ENCODE measurements at regions of chr19 and their contacts with region 1.

Region 1: DNA sequence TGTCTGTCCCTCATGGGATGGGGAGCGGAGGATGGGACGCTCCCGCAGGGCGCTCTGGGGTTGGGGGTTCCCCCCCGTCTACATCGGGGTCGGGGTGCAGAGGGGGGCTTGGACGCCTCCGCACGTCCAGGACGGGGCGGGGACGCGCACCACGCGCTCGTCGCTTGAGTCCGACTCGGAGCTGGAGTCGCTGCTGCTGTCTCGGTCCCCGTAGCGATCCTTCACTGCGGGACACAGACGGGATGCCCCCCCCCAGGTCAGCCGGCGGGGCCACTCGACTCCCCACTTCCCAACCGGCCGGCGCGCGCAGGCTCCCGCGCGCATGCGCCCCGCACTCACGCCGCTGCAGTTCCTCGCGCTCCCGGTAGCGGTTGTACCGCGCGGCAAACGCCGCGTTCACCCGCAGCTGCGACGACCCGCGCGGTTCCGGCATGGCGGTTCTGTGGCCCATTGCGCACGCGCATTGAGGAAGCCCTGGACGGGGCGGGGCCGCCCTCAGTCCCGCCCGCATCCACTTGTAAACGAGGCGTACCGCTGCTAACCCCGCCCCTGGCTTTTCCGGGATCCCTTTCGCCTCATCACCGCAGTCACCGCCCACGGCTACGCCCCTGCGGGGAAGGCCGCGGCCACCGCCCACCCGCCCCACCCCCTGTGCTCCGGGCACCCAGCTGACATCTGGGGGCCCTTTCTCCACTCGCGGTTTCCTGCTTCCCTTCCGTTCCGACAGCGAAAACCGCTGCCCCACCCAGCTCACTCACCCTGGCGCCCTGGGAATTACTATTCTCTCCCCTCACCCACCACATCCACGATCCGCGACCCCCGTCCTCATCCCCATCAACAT is at the start of gene KRI1:
- DNase-seq: peak; percentile 95 to 98 (median 97)
- H3K4me3 ChIP-seq: peak within 1 kb of the TSS; percentile 57 to 98 (median 82)
- H3K27ac ChIP-seq: peak within 1 kb of the TSS; percentile 51 to 97 (median 89)
- H3K27me3 ChIP-seq: no peaks in the 10 kb centered on the region
- CTCF ChIP-seq: peak in 47 of 56 donors; percentile 11 to 69 (median 42)
- total RNA-seq, gene KRI1: 11.3 to 32.1 (median 19.2) TPM

Region 2: GRCh38 chr19:10403137-10404021 is 162.4 kb before region 1 on chr19 and contains the start of gene CDC37:
- intact Hi-C with region 1: loop called (anchors 5 to 10 kb)
- DNase-seq: peak; percentile 95 to 100 (median 98)
- H3K4me3 ChIP-seq: peak within 1 kb of the TSS; percentile 64 to 99 (median 91)
- H3K27ac ChIP-seq: peak within 1 kb of the TSS in 51 of 59 donors; percentile 11 to 85 (median 69)
- H3K27me3 ChIP-seq: peaks cover 0 to 6% (median 0%) of the 10 kb centered on the region in 45 donors
- CTCF ChIP-seq: peak in 22 of 56 donors; percentile 6 to 47 (median 23)
- total RNA-seq, gene CDC37: 92.2 to 206 (median 145) TPM

Region 3: GRCh38 chr19:10408511-10409283 is 157.1 kb before region 1 on chr19:
- intact Hi-C with region 1: loop called (anchors 5 to 10 kb)
- DNase-seq: peak in 3 of 10 donors; percentile 38 to 45 (median 45)
- H3K4me3 ChIP-seq: peak overlapping the region in 3 of 59 donors; percentile 8 to 25 (median 17)
- H3K27ac ChIP-seq: peak overlapping the region in 36 of 59 donors; percentile 0 to 75 (median 46)
- H3K27me3 ChIP-seq: peaks cover 0 to 8% (median 0%) of the 10 kb centered on the region in 45 donors
- CTCF ChIP-seq: no peak

Region 4: GRCh38 chr19:10502524-10503001 is 63.2 kb before region 1 on chr19:
- intact Hi-C with region 1: loop called (anchors 5 kb)
- DNase-seq: peak; percentile 86 to 94 (median 90)
- H3K4me3 ChIP-seq: peak overlapping the region; percentile 71 to 100 (median 95)
- H3K27ac ChIP-seq: peak overlapping the region; percentile 94 to 100 (median 99)
- H3K27me3 ChIP-seq: no peaks in the 10 kb centered on the region
- CTCF ChIP-seq: peak in 28 of 56 donors; percentile 2 to 46 (median 20)

Region 5: DNA sequence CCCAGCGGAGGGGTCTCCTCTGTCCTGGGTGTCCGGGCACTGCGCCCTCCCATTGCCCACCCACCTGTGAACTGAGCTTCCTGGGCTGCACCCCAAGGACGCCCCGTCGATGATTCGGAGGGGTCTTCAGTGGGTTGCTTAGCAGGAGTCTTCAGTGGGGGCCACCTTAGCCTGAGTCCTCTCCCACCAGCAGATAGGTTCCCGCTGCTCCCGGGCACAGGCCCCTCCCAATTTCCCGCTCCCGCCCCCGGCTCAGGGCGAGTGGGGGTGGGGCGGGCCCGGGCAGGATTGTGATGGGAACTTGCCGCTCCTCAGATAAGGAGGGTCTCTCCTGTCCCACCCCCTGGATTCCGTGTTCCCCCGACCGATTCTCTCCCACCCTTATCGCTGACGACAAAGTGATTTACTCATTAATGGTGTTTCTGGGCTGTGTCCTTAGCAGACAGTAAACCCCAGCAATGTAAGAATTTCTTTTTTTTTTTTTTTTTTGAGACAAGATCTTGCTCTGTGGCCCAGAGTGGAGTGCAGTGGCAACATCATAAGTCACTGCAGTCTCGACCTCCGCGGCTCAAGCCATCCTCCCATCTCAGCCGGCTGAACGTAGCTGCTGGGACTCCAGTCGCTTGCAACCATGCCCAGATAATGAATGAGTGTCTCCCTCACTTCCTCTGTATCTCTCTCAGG is 47.9 kb before region 1 on chr19:
- intact Hi-C with region 1: loop called in 1 of 2 experiments (anchors 5 kb)
- DNase-seq: peak in 7 of 10 donors; percentile 45 to 73 (median 56)
- H3K4me3 ChIP-seq: peak overlapping the region; percentile 28 to 83 (median 64)
- H3K27ac ChIP-seq: peak overlapping the region in 58 of 59 donors; percentile 75 to 100 (median 98)
- H3K27me3 ChIP-seq: peaks cover 0 to 70% (median 44%) of the 10 kb centered on the region in 45 donors
- CTCF ChIP-seq: peak in 1 of 56 donors; percentile 4

Region 6: GRCh38 chr19:10587022-10587789 is 21.4 kb after region 1 on chr19 and contains the start of gene AP1M2:
- intact Hi-C with region 1: no loop called
- DNase-seq: no peak
- H3K4me3 ChIP-seq: no peak within 1 kb of the TSS
- H3K27ac ChIP-seq: no peak within 1 kb of the TSS
- H3K27me3 ChIP-seq: peaks cover 0 to 32% (median 13%) of the 10 kb centered on the region in 45 donors
- CTCF ChIP-seq: no peak
- total RNA-seq, gene AP1M2: 0.35 to 2.8 (median 1.5) TPM in 32 of 120 experiments, not detected in the others

Region 7: GRCh38 chr19:10737722-10738121 is 171.9 kb after region 1 on chr19:
- intact Hi-C with region 1: no loop called
- DNase-seq: no peak
- H3K4me3 ChIP-seq: no peak overlapping the region
- H3K27ac ChIP-seq: peak overlapping the region in 47 of 59 donors; percentile 1 to 97 (median 66)
- H3K27me3 ChIP-seq: no peaks in the 10 kb centered on the region
- CTCF ChIP-seq: no peak